ENCODE measurements at regions of chr5 and their contacts with region 1.

Region 1: DNA sequence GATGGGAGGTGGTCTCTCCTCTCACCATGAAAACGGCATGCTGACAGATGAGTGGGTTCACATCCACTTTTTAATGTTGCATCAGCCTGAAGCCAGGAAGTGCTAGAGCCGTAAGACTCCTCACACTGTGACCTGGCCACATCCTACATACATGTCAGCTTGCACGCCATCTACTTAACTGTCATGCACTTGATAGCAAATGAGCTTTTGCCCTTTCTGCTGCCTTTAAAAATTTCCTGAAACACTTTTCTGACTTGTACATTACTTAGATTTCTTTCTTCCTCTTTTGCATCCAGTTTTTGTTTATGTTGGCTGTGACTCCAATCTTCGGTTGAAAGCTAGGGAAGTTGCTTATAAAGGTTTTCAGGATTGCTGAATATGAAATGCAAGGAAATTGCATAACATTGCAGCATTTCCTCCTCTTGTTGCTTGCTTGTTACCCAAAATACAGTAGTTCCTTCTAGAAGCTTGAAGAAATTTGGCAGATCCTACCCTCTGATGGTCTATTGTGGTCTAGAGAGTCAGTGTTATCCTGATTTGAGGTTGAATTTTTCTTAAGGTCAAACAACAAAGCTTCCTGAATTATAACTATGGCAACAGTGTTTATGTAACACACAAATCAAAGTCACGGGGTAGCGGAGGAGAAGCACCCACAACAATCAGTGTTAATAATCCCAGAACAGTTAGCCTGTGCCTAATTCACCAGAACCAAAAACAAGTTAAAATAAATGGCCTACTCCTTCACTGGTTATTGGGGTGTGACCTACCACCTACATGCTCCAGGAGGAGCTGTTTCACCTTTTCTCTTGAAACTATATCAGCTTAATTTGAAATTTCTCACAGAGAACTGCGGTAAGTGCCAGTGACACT is 232.5 kb downstream of the ARHGAP26 start:
- DNase-seq: peak; percentile 97
- H3K4me3 ChIP-seq: peak overlapping the region in 1 of 3 experiments; percentile 14
- H3K27ac ChIP-seq: peak overlapping the region; percentile 90
- H3K4me1 ChIP-seq: peaks cover 22% of the 10 kb centered on the region
- H3K27me3 ChIP-seq: no peaks in the 10 kb centered on the region
- CTCF ChIP-seq: peak; percentile 30 to 34
- POLR2A ChIP-seq: no peak

Region 2: DNA sequence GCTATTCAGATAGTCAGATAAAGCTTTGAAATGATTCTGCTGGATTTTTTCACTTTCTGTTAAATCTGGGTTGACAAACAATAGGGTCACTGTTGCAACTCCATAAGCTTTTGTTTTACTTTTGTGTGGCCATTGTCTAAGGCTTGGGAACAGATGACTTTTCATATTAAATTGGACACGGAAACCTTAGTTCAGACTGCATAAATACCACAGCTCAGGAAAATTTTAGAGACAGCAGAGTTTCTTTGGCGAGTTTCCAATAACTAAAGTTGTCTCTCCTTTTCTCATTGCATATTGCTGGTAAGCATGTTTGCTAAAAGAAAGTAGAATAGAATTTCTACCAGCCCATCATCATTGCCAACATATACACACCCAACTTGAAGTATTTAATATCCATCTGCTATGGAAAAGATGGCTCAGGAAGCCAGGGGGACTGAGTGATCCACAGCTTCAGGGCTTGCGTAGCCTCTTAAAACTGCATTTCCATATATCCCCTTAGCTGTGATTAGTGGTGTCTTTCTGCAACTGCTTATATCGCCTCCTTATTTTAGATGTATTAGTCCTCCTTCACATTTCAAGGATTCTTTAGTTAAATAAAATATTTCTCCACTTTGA is 64.3 kb before region 1 on chr5:
- CTCF ChIA-PET with region 1: interaction called, 7 read pairs
- POLR2A ChIA-PET with region 1: no interaction called
- dilution Hi-C with region 1: no loop called
- intact Hi-C with region 1: loop called (anchors 5 kb)
- DNase-seq: peak; percentile 41
- H3K4me3 ChIP-seq: no peak overlapping the region
- H3K27ac ChIP-seq: no peak overlapping the region
- H3K4me1 ChIP-seq: peaks cover 22% of the 10 kb centered on the region
- H3K27me3 ChIP-seq: no peaks in the 10 kb centered on the region
- CTCF ChIP-seq: no peak
- POLR2A ChIP-seq: no peak

Region 3: GRCh38 chr5:142981886-142982820 is 20.5 kb before region 1 on chr5:
- CTCF ChIA-PET with region 1: interaction called, 23 read pairs
- POLR2A ChIA-PET with region 1: interaction called, 3 read pairs
- dilution Hi-C with region 1: no loop called
- intact Hi-C with region 1: loop called (anchors 1 kb)
- DNase-seq: peak; percentile 75
- H3K4me3 ChIP-seq: peak overlapping the region in 1 of 3 experiments; percentile 5
- H3K27ac ChIP-seq: peak overlapping the region; percentile 62
- H3K4me1 ChIP-seq: peaks cover 62% of the 10 kb centered on the region
- H3K27me3 ChIP-seq: no peaks in the 10 kb centered on the region
- CTCF ChIP-seq: no peak
- POLR2A ChIP-seq: no peak

Region 4: DNA sequence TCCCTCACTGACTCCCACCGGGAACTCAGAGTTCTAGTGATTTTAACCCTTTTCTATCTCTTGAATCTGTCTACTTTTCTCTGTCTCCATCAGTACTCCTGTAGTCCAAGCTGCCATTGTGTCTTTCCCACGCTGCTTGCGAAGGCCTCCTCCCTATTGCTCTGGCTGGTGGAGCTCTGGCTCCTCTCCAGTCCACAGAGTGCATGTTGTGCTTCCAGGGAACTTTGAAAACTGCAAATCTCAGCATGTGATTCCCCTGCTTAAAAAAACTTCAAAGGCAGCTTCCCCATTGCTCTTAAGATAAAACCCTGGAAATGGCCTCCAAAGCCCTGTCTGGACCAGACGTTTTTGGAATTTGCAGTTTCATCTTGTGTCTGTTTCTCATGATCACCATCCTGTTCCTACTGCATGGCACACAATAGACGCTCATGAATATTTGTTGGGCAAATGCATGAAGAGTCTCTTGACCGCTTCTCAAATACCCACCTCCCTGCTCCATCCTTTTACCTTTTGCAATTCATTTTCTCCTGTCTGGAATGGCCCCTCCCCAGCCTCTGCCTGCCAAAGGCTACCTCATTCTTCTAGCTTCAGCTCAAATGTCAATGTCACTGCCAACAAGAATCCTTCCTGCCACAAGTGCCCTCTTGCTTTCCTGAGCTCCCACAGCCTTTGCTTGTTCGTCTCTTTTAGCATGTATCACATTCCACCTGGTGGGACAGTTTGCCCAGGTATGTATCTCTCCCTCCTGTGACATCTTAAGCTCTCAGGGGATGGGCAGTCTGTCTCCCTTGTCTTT is 60.7 kb after region 1 on chr5:
- CTCF ChIA-PET with region 1: interaction called, 6 read pairs
- POLR2A ChIA-PET with region 1: no interaction called
- dilution Hi-C with region 1: no loop called
- intact Hi-C with region 1: loop called (anchors 1 kb)
- DNase-seq: no peak
- H3K4me3 ChIP-seq: no peak overlapping the region
- H3K27ac ChIP-seq: peak overlapping the region; percentile 12
- H3K4me1 ChIP-seq: peaks cover 59% of the 10 kb centered on the region
- H3K27me3 ChIP-seq: no peaks in the 10 kb centered on the region
- CTCF ChIP-seq: no peak
- POLR2A ChIP-seq: no peak

Region 5: DNA sequence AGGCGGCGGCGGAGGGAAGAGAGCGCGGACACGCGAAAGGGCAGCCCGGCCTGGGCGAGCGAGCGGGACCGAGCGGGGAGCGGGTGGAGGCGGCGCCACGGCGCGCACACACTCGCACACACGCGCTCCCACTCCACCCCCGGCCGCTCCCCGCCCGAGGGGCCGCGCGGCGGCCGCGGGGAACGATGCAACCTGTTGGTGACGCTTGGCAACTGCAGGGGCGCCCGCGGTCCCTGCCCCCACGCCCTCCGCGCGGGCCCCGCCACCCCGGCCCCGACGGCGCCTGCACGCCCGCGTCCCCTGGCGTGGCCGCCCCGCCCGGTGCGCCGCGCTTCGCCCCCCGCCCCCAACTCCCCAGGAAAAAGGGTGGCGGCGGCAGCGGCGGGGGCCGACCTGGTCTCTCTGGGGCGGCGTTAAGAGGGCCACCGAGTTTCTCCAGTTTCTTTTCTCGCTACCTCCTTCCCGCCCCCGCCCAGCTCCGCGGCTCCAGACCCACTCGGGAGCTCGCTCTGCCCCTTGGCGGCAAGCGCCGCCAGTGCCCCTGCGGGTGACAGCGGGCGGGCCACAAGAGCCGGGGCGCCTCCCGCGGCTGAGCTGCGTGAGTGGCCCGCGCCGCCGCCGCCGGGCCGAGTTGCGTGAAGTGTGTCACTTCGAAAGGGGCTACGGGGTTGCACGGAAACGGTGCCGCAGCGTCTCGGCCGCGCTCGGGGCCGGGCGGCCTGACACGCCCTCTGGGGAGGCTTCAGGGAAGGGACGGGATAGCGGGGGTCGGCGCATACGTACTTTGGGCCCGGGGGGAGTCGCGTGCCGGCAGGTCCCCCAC is 401.1 kb after region 1 on chr5 and contains the start of gene NR3C1:
- CTCF ChIA-PET with region 1: interaction called, 35 read pairs
- POLR2A ChIA-PET with region 1: no interaction called
- dilution Hi-C with region 1: no loop called
- intact Hi-C with region 1: loop called (anchors 1 kb)
- DNase-seq: peak; percentile 78
- H3K4me3 ChIP-seq: peak within 1 kb of the TSS; percentile 64 to 94 (median 87)
- H3K27ac ChIP-seq: peak within 1 kb of the TSS; percentile 94
- H3K4me1 ChIP-seq: peaks cover 39% of the 10 kb centered on the region
- H3K27me3 ChIP-seq: no peaks in the 10 kb centered on the region
- CTCF ChIP-seq: peak; percentile 16 to 62
- POLR2A ChIP-seq: no peak
- total RNA-seq, gene NR3C1: 17.0 and 21.2 TPM in 2 replicates

Region 6: GRCh38 chr5:143968011-143968878 is 965.6 kb after region 1 on chr5:
- CTCF ChIA-PET with region 1: interaction called, 4 read pairs
- POLR2A ChIA-PET with region 1: no interaction called
- dilution Hi-C with region 1: no loop called
- intact Hi-C with region 1: loop called (anchors 1 kb)
- DNase-seq: peak; percentile 54
- H3K4me3 ChIP-seq: no peak overlapping the region
- H3K27ac ChIP-seq: no peak overlapping the region
- H3K4me1 ChIP-seq: peaks cover 9% of the 10 kb centered on the region
- H3K27me3 ChIP-seq: no peaks in the 10 kb centered on the region
- CTCF ChIP-seq: peak in 1 of 2 donors; percentile 18
- POLR2A ChIP-seq: no peak

Measured in endothelial cell of umbilical vein (primary cell).